ENCODE measurements at regions of chr6 and their contacts with region 1.

Region 1: GRCh38 chr6:3363296-3364025 is 93.4 kb downstream of the SLC22A23 start:
- DNase-seq: peak; percentile 90 to 93
- H3K4me3 ChIP-seq: peak overlapping the region; percentile 16; the same call in 1 of the 2 replicates
- H3K27ac ChIP-seq: peak overlapping the region; percentile 71
- H3K4me1 ChIP-seq: peaks cover 33% of the 10 kb centered on the region
- H3K27me3 ChIP-seq: no peaks in the 10 kb centered on the region
- CTCF ChIP-seq: no peak

Region 2: GRCh38 chr6:2684059-2684749 is 679.3 kb before region 1 on chr6:
- CTCF ChIA-PET with region 1: no interaction called
- POLR2A ChIA-PET with region 1: no interaction called
- intact Hi-C with region 1: no loop called
- DNase-seq: peak; percentile 64 to 68
- H3K4me3 ChIP-seq: no peak overlapping the region
- H3K27ac ChIP-seq: peak overlapping the region; percentile 62
- H3K4me1 ChIP-seq: peaks cover 5% of the 10 kb centered on the region; the same call in 1 of the 2 replicates
- H3K27me3 ChIP-seq: no peaks in the 10 kb centered on the region
- CTCF ChIP-seq: no peak

Region 3: GRCh38 chr6:3377536-3378397 is 14.3 kb after region 1 on chr6:
- CTCF ChIA-PET with region 1: no interaction called
- POLR2A ChIA-PET with region 1: interaction called, 6 read pairs
- intact Hi-C with region 1: loop called (anchors 1 kb)
- DNase-seq: peak in 1 of 2 experiments; percentile 69
- H3K4me3 ChIP-seq: no peak overlapping the region
- H3K27ac ChIP-seq: no peak overlapping the region
- H3K4me1 ChIP-seq: peaks cover 35% of the 10 kb centered on the region
- H3K27me3 ChIP-seq: no peaks in the 10 kb centered on the region
- CTCF ChIP-seq: no peak

Region 4: GRCh38 chr6:3390698-3391097 is 27.2 kb after region 1 on chr6:
- CTCF ChIA-PET with region 1: no interaction called
- POLR2A ChIA-PET with region 1: no interaction called
- intact Hi-C with region 1: loop called (anchors 2 kb)
- DNase-seq: peak; percentile 70 to 82
- H3K4me3 ChIP-seq: no peak overlapping the region
- H3K27ac ChIP-seq: peak overlapping the region; percentile 50; the same call in 1 of the 2 replicates
- H3K4me1 ChIP-seq: no peaks in the 10 kb centered on the region
- H3K27me3 ChIP-seq: no peaks in the 10 kb centered on the region
- CTCF ChIP-seq: no peak

Region 5: GRCh38 chr6:3410385-3411360 is 47.2 kb after region 1 on chr6:
- CTCF ChIA-PET with region 1: no interaction called
- POLR2A ChIA-PET with region 1: no interaction called
- intact Hi-C with region 1: no loop called
- DNase-seq: peak in 1 of 2 experiments; percentile 24
- H3K4me3 ChIP-seq: no peak overlapping the region
- H3K27ac ChIP-seq: no peak overlapping the region
- H3K4me1 ChIP-seq: peaks cover 42% of the 10 kb centered on the region
- H3K27me3 ChIP-seq: no peaks in the 10 kb centered on the region
- CTCF ChIP-seq: peak; percentile 71